CD4-positive, alpha-beta memory T cell (primary cell): ENCODE measurements at regions of chr1 and their contacts with region 1.

Region 1: DNA sequence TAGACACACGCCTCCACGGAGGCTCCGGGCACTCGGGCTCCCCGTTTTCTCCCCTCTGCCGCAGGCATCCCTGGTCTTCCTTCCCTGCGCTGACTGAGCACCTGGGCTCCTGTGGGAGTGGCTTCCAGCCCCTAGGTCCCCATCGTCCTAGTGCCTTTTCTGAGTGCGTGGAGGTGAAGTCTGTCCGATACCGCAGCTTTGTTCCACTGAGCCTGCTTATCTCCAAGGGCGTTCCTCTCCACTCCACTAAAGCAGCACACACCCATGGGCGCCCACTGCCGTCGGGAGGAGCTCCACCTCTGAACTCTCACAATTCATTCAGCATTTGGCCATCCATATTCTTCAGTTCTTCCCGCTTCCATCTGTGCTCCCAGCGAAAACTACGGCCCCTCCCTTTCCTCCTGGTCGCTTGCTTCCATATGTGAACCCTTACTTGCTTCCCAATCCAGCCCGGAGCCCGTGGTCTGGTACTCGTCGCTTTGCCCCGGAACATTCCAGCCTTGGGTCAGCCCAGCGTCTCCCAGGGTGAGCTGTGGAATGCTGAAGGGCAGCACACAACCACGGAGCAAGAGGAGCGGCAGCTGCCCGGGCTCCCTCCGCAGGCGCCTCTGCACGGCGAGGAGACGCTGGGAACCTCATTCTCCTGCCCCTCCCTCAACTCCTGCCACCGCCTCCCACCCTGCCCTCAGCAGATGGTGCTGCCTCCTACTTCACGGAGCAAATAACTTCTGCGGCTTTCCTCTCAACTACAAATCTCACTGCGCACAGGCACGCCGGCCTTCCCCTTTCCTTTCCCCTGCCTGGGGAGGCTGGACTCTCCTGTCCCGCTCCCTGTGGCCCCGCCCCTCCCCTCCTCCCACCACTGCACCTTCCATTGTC is 27.5 kb downstream of the ATP8B2 start:
- DNase-seq: peak; percentile 44 to 68 (median 48)
- H3K4me3 ChIP-seq: peak overlapping the region; percentile 69 to 77
- H3K4me3 Mint-ChIP-seq: peak overlapping the region; percentile 84 to 95 (median 92)
- H3K27ac ChIP-seq: peak overlapping the region; percentile 51
- H3K27ac Mint-ChIP-seq: peak overlapping the region; percentile 38 to 96 (median 90)
- H3K4me1 ChIP-seq: peaks cover 54% of the 10 kb centered on the region
- H3K4me1 Mint-ChIP-seq: peaks cover 30 to 61% (median 44%) of the 10 kb centered on the region in 4 donors
- H3K27me3 ChIP-seq: no peaks in the 10 kb centered on the region
- H3K27me3 Mint-ChIP-seq: no peaks in the 10 kb centered on the region

Region 2: DNA sequence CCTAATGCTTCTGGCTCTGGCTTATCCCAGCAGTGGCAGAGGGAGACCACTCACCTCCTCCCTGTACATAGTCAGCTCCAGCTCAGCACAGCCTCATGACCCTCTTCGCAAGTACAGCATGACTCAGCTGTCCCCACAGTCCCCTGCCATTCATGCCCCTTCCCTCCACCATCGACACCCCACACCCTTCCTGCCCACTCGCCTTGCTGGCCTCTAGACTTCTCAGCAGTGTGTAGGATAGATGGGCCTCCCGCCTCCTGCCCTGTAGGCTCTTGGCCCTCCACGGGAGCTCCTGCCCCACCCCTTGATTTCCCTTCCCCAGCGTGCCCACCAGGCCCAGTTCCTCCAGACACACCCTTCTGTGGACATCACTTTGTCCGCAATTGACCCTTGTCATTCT is 664.5 kb before region 1 on chr1:
- CTCF ChIA-PET with region 1: no interaction called
- POLR2A ChIA-PET with region 1: no interaction called
- intact Hi-C with region 1: no loop called
- DNase-seq: no peak
- H3K4me3 ChIP-seq: no peak overlapping the region
- H3K4me3 Mint-ChIP-seq: peak overlapping the region in 1 of 8 donors; percentile 5
- H3K27ac ChIP-seq: no peak overlapping the region
- H3K27ac Mint-ChIP-seq: peak overlapping the region in 1 of 7 donors; percentile 4
- H3K4me1 ChIP-seq: peaks cover 4% of the 10 kb centered on the region
- H3K4me1 Mint-ChIP-seq: peaks cover 3 to 9% (median 5%) of the 10 kb centered on the region in 4 donors
- H3K27me3 ChIP-seq: no peaks in the 10 kb centered on the region
- H3K27me3 Mint-ChIP-seq: peaks cover 3 to 8% of the 10 kb centered on the region in 2 donors

Region 3: DNA sequence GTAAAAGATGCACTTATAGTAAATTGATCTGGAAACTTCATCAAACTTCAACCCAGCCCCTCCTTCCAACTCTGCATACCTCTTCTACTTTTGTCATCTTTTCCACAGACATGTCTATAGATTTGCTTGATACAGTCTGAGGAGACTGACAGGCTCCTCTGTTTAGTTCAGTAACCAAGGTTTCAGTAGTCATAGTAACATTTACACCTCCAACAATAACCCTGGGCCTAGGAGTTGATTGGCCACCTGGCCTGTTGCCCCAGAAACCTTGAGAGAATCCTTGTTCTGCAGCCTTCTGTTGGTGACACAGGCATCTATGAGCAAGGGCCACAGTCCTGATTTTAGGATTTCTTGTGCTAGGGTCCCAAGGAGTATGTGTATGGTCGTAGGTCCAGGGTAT is 146.6 kb before region 1 on chr1 and contains the start of gene CFAP141:
- CTCF ChIA-PET with region 1: no interaction called
- POLR2A ChIA-PET with region 1: no interaction called
- intact Hi-C with region 1: no loop called
- DNase-seq: peak in 3 of 5 donors; percentile 16 to 37 (median 28)
- H3K4me3 ChIP-seq: no peak within 1 kb of the TSS
- H3K4me3 Mint-ChIP-seq: no peak within 1 kb of the TSS
- H3K27ac ChIP-seq: no peak within 1 kb of the TSS
- H3K27ac Mint-ChIP-seq: peak within 1 kb of the TSS; percentile 59 to 95 (median 81)
- H3K4me1 ChIP-seq: no peaks in the 10 kb centered on the region
- H3K4me1 Mint-ChIP-seq: peaks cover 3 to 8% (median 5%) of the 10 kb centered on the region in 4 donors
- H3K27me3 ChIP-seq: no peaks in the 10 kb centered on the region
- H3K27me3 Mint-ChIP-seq: no peaks in the 10 kb centered on the region
- total RNA-seq, gene CFAP141: not detected

Region 4: GRCh38 chr1:154386643-154387352 is 34.0 kb after region 1 on chr1:
- CTCF ChIA-PET with region 1: interaction called, 8 read pairs
- POLR2A ChIA-PET with region 1: interaction called, 10 read pairs
- intact Hi-C with region 1: loop called (anchors 2 kb)
- DNase-seq: peak in 4 of 5 donors; percentile 43 to 86 (median 58)
- H3K4me3 ChIP-seq: peak overlapping the region in 1 of 2 donors; percentile 34
- H3K4me3 Mint-ChIP-seq: peak overlapping the region; percentile 79 to 88 (median 85)
- H3K27ac ChIP-seq: peak overlapping the region; percentile 67
- H3K27ac Mint-ChIP-seq: peak overlapping the region; percentile 88 to 99 (median 97)
- H3K4me1 ChIP-seq: peaks cover 36% of the 10 kb centered on the region
- H3K4me1 Mint-ChIP-seq: peaks cover 22 to 34% (median 28%) of the 10 kb centered on the region in 4 donors
- H3K27me3 ChIP-seq: no peaks in the 10 kb centered on the region
- H3K27me3 Mint-ChIP-seq: no peaks in the 10 kb centered on the region